ENCODE measurements at regions of chr21 and their contacts with region 1.

Region 1: GRCh38 chr21:40120940-40121575 is 253.8 kb downstream of the PCP4 start:
- DNase-seq: no peak

Region 2: GRCh38 chr21:38438476-38438893 is 1682.6 kb before region 1 on chr21:
- intact Hi-C with region 1: no loop called
- DNase-seq: peak; percentile 91

Region 3: DNA sequence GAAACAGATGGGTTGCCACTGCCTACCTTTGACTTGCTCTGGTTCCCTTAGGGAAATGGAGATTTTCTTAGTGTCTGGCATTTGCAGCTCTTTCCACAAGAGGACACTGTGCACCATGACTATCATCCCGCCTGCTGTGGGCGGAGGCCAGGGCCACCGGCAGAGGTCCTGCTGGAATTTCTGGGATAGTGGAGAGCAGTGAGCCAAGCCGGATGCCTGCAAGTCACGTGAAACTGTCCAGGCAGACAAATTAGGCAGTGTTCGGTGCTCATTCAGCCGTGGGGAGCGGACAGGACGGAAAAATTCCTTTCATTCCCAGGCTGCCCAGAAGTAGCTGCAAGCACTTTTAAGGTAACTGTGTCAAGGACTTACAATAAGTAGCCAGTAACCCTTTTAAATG is 332.7 kb before region 1 on chr21:
- intact Hi-C with region 1: loop called in 1 of 2 experiments (anchors 5 kb)
- DNase-seq: peak; percentile 88